ENCODE measurements at regions of chrX and their contacts with region 1.

Region 1: DNA sequence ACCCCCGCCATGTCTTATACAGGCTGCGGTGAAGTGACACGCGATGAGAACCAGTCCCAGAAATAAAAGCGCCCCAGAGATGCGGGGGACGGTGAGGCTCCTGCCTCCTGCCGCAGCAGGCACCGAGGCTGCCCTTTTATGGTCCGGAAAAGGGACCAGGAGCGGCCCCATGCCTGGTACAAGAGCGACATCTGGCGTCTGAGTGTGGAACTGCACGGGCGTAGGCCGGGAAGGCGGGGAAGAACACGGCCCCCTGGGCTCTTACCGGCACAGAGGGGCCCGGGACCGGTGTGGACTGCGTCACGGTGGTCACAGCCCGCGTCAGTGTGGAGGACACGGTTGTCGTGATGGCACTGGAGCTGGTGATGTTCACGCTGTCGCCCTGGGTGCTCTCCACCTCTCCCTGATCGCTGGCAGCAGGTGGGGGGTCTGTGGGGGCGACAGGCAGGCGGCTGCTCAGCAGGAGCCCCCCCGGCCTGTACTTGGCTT is 8.9 kb upstream of the RENBP start:
- DNase-seq: peak; percentile 76 to 82 (median 78)
- H3K4me3 ChIP-seq: no peak overlapping the region
- H3K4me3 Mint-ChIP-seq: peak overlapping the region in 1 of 8 donors; percentile 43
- H3K27ac ChIP-seq: peak overlapping the region; percentile 31
- H3K27ac Mint-ChIP-seq: peak overlapping the region in 6 of 7 donors; percentile 57 to 84 (median 74)
- H3K4me1 ChIP-seq: peaks cover 4% of the 10 kb centered on the region
- H3K4me1 Mint-ChIP-seq: peaks cover 0 to 7% (median 2%) of the 10 kb centered on the region in 4 donors
- H3K27me3 ChIP-seq: no peaks in the 10 kb centered on the region
- H3K27me3 Mint-ChIP-seq: no peaks in the 10 kb centered on the region

Region 2: GRCh38 chrX:153687121-153688039 is 266.0 kb before region 1 on chrX and contains the start of gene SLC6A8:
- CTCF ChIA-PET with region 1: interaction called, 4 read pairs
- POLR2A ChIA-PET with region 1: no interaction called
- intact Hi-C with region 1: loop called (anchors 5 kb)
- DNase-seq: peak in 3 of 5 donors; percentile 10 to 44 (median 23)
- H3K4me3 ChIP-seq: no peak within 1 kb of the TSS
- H3K4me3 Mint-ChIP-seq: peak within 1 kb of the TSS; percentile 63 to 88 (median 76)
- H3K27ac ChIP-seq: no peak within 1 kb of the TSS
- H3K27ac Mint-ChIP-seq: no peak within 1 kb of the TSS
- H3K4me1 ChIP-seq: no peaks in the 10 kb centered on the region
- H3K4me1 Mint-ChIP-seq: no peaks in the 10 kb centered on the region
- H3K27me3 ChIP-seq: no peaks in the 10 kb centered on the region
- H3K27me3 Mint-ChIP-seq: no peaks in the 10 kb centered on the region
- total RNA-seq, gene SLC6A8: 0.84 to 1.4 TPM

Region 3: GRCh38 chrX:153763989-153764755 is 189.2 kb before region 1 on chrX and contains the start of gene PLXNB3:
- CTCF ChIA-PET with region 1: interaction called, 28 read pairs
- POLR2A ChIA-PET with region 1: no interaction called
- intact Hi-C with region 1: loop called (anchors 1 kb)
- DNase-seq: peak; percentile 56 to 76 (median 69)
- H3K4me3 ChIP-seq: no peak within 1 kb of the TSS
- H3K4me3 Mint-ChIP-seq: no peak within 1 kb of the TSS
- H3K27ac ChIP-seq: no peak within 1 kb of the TSS
- H3K27ac Mint-ChIP-seq: peak within 1 kb of the TSS in 1 of 7 donors; percentile 42
- H3K4me1 ChIP-seq: no peaks in the 10 kb centered on the region
- H3K4me1 Mint-ChIP-seq: peaks cover 4 to 10% (median 7%) of the 10 kb centered on the region in 4 donors
- H3K27me3 ChIP-seq: no peaks in the 10 kb centered on the region
- H3K27me3 Mint-ChIP-seq: no peaks in the 10 kb centered on the region
- total RNA-seq, gene PLXNB3: not detected

Measured in CD4-positive, alpha-beta memory T cell (primary cell).